Common myeloid progenitor, CD34-positive (primary cell): ENCODE measurements at regions of chr19 and their contacts with region 1.

Region 1: DNA sequence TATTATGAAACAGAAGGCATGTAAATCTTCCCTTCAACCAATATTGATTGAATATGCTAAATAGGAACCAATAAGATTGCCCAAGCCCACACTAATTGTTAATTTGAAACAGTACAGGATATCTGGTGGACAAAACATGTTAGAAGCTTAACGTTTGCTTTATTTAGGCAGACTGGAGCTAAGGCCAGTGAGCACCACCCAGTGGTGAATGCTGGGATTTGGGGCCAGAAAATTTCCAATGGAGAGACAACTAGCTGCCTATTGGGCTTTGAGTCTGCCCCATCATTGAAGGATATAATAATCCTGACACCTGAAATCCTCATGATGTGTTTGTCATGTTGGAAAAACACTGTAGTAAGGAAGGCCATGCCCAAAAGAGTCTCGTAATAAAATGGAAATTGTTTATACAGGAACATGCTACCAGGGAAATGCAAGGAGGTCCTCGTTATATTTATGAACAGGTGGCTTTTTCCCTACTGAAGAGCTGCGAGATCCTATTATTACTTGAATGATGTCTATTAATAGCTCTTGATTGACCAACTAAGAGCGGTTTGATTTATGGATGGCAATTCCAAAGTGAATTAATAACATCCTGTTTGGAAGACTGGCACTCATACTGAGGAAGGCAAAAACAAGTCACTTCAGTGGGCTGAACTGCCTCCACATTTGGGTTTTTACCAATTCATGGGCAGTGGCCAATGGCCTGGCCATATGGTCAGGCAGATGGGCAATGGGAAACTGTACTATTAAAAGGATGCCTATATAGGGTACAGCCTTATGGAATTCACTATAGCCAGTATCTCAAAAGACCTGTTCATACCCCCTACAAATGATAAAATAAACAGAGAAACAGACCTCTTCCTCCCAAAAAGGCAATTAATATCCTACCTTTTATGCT is 8.7 kb downstream of the SIGLECL1 start:
- DNase-seq: peak; percentile 67 to 80 (median 76)
- H3K4me3 ChIP-seq: no peak overlapping the region
- H3K27ac ChIP-seq: no peak overlapping the region
- H3K4me1 ChIP-seq: peaks cover 19 to 30% (median 25%) of the 10 kb centered on the region in 4 experiments
- H3K27me3 ChIP-seq: no peaks in the 10 kb centered on the region

Region 2: DNA sequence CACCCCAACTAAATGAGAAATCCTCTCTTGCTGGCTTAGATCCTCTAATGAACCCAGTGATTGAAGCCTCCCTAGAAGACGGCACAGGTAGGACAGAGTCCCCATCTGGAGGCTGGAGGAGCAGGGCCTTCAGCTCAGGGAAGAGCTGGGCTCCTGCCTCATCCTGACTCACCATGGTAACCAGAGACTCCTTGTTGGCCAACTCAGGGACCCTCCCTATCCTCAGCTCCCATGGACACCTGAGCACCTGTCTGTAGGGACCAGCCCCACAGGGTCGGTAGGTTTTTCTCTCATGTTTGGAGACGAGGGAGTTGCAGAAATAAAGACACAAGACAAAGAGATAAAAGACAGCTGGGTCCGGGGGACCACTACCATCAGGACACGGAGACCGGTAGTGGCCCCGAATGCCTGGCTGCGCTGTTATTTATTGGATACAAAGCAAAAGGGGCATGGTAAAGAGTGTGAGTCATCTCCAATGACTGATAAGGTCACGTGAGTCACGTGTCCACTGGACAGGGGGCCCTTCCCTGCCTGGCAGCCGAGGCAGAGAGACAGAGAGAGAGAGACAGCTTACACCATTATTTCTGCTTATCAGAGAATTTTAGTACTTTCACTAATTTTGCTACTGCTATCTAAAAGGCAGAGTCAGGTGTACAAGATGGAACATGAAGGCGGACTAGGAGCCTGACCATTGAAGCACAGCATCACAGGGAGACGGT is 90.9 kb before region 1 on chr19:
- CTCF ChIA-PET with region 1: interaction called, 18 read pairs
- POLR2A ChIA-PET with region 1: no interaction called
- DNase-seq: no peak
- H3K4me3 ChIP-seq: no peak overlapping the region
- H3K27ac ChIP-seq: no peak overlapping the region
- H3K4me1 ChIP-seq: peaks cover 5 to 41% (median 25%) of the 10 kb centered on the region in 4 experiments
- H3K27me3 ChIP-seq: no peaks in the 10 kb centered on the region

Region 3: GRCh38 chr19:51181913-51182419 is 77.6 kb before region 1 on chr19:
- CTCF ChIA-PET with region 1: interaction called, 15 read pairs
- POLR2A ChIA-PET with region 1: no interaction called
- DNase-seq: peak; percentile 14 to 46 (median 37)
- H3K4me3 ChIP-seq: peak overlapping the region in 3 of 7 experiments; percentile 10 to 33 (median 26)
- H3K27ac ChIP-seq: no peak overlapping the region
- H3K4me1 ChIP-seq: peaks cover 0 to 62% (median 50%) of the 10 kb centered on the region in 4 experiments
- H3K27me3 ChIP-seq: no peaks in the 10 kb centered on the region

Region 4: GRCh38 chr19:51246164-51246552 is 13.4 kb before region 1 on chr19:
- CTCF ChIA-PET with region 1: interaction called, 42 read pairs
- POLR2A ChIA-PET with region 1: interaction called, 5 read pairs
- DNase-seq: peak; percentile 95 to 99 (median 98)
- H3K4me3 ChIP-seq: peak overlapping the region in 4 of 7 experiments; percentile 19 to 46 (median 32)
- H3K27ac ChIP-seq: peak overlapping the region in 1 of 2 experiments; percentile 59
- H3K4me1 ChIP-seq: peaks cover 18 to 80% (median 74%) of the 10 kb centered on the region in 4 experiments
- H3K27me3 ChIP-seq: no peaks in the 10 kb centered on the region

Region 5: GRCh38 chr19:51272183-51272810 is 12.7 kb after region 1 on chr19:
- CTCF ChIA-PET with region 1: interaction called, 15 read pairs
- POLR2A ChIA-PET with region 1: no interaction called
- DNase-seq: peak; percentile 36 to 73 (median 66)
- H3K4me3 ChIP-seq: no peak overlapping the region
- H3K27ac ChIP-seq: no peak overlapping the region
- H3K4me1 ChIP-seq: peaks cover 0 to 18% (median 10%) of the 10 kb centered on the region in 4 experiments
- H3K27me3 ChIP-seq: no peaks in the 10 kb centered on the region

Region 6: GRCh38 chr19:51285682-51286081 is 26.1 kb after region 1 on chr19:
- CTCF ChIA-PET with region 1: no interaction called
- POLR2A ChIA-PET with region 1: no interaction called
- DNase-seq: no peak
- H3K4me3 ChIP-seq: no peak overlapping the region
- H3K27ac ChIP-seq: no peak overlapping the region
- H3K4me1 ChIP-seq: no peaks in the 10 kb centered on the region
- H3K27me3 ChIP-seq: peaks cover 0 to 8% (median 6%) of the 10 kb centered on the region in 5 experiments